ENCODE measurements at regions of chr3 and their contacts with region 1.

Region 1: DNA sequence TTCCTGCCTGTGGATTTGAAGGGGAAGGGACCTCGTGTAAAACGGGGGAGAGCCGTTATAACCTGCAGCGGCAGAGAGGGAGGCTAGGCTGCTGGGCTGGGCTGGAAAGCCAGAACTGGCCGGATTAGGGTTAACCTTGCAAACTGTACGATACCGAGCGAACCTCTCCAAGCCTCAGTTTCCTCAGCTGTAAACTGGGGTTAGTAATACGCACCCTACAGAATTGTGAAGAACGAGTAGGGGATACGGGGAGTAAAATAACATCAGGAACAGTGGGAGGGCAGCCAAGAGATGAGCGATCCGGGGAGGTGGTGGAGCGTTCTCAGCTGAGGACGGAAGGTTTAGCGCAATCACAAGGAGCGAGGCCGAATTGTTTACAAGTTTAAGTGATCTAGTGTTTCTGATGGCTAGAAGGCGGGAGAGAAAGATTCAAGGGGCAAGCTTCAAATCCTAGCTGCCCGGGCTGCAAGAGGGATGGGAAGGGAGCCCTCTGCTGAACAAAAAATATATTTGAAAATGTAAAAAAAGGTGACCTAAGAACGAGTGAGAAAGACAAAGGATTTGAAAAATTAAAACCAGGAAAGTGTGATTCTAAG is 768 bp upstream of the SEMA5B start:
- DNase-seq: no peak
- H3K4me3 Mint-ChIP-seq: peak overlapping the region; percentile 74
- H3K27ac Mint-ChIP-seq: no peak overlapping the region
- H3K4me1 Mint-ChIP-seq: peaks cover 14% of the 10 kb centered on the region
- H3K27me3 Mint-ChIP-seq: peaks cover 62% of the 10 kb centered on the region

Region 2: GRCh38 chr3:122739172-122739571 is 289.2 kb before region 1 on chr3:
- intact Hi-C with region 1: no loop called
- DNase-seq: no peak
- H3K4me3 Mint-ChIP-seq: no peak overlapping the region
- H3K27ac Mint-ChIP-seq: no peak overlapping the region
- H3K4me1 Mint-ChIP-seq: no peaks in the 10 kb centered on the region
- H3K27me3 Mint-ChIP-seq: no peaks in the 10 kb centered on the region

Region 3: DNA sequence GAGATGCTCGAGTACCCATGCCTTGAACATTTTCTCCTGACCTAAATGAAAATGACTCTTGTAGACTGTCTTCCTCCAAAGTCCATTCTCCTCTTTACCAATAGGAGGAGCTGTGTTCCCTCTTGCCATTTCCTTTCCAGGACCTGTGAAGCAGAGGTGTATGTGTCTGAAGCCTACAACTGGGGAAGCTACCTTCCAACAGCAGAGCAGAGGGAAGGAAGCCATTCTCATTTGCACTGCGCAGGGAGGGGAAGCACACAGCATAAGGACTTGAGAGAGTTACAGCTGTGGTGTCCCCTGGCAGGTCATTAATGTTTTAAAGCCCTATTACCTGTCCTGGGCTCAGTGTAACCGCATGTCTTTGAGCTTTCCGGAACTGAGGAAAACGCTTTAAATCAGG is 273.4 kb before region 1 on chr3:
- intact Hi-C with region 1: loop called (anchors 1 kb)
- DNase-seq: no peak
- H3K4me3 Mint-ChIP-seq: no peak overlapping the region
- H3K27ac Mint-ChIP-seq: no peak overlapping the region
- H3K4me1 Mint-ChIP-seq: peaks cover 9% of the 10 kb centered on the region
- H3K27me3 Mint-ChIP-seq: no peaks in the 10 kb centered on the region

Region 4: GRCh38 chr3:122858373-122858772 is 170.0 kb before region 1 on chr3:
- intact Hi-C with region 1: loop called (anchors 1 kb)
- DNase-seq: no peak
- H3K4me3 Mint-ChIP-seq: no peak overlapping the region
- H3K27ac Mint-ChIP-seq: no peak overlapping the region
- H3K4me1 Mint-ChIP-seq: peaks cover 9% of the 10 kb centered on the region
- H3K27me3 Mint-ChIP-seq: no peaks in the 10 kb centered on the region

Region 5: DNA sequence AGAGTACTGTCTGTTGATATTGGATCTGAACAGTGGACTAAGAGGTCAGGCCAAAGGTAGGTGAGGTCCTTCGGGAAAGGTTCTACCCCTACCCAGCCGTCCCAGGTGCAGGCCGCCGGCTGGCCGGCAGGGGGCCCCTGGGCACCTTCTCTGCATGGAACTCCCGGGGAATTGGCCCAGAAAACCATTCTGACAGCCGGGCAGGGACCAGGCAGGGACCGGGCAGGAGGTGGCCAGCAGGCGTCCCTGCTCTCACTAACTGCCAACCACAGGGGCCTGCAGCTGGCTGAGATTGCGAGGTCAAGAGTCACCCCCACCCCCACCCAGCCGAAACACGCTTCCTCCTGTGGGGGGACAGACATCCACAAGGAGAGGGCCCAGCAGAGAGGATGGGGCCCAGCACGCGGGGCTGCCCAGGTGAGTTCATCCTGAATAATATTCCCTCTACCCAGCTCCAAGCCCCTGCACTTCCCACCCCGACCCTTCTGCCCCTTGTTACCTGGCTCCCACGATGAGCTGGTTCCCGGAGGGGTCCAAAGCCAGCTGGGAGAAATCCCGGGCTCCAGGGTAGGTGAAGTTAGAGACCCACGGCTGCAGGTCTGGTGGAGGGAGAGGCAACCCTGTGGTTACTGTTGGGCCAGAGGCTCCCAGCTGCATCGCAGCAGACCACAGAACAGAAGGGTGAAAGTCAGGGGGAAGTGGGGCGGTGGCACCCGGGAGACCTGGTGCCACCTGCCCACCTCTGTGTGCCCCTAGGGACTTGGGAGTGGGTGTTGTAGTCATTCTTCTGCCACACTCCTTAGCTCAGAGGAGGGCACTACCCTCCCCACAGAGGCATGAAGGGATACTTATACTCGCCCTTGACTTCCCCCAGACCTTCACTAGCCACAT is 85.1 kb before region 1 on chr3:
- intact Hi-C with region 1: loop called (anchors 1 kb)
- DNase-seq: no peak
- H3K4me3 Mint-ChIP-seq: no peak overlapping the region
- H3K27ac Mint-ChIP-seq: no peak overlapping the region
- H3K4me1 Mint-ChIP-seq: no peaks in the 10 kb centered on the region
- H3K27me3 Mint-ChIP-seq: peaks cover 14% of the 10 kb centered on the region

Region 6: GRCh38 chr3:123066896-123067688 is 38.8 kb after region 1 on chr3 and contains the start of gene PDIA5:
- intact Hi-C with region 1: loop called (anchors 1 kb)
- DNase-seq: peak; percentile 61
- H3K4me3 Mint-ChIP-seq: peak within 1 kb of the TSS; percentile 91
- H3K27ac Mint-ChIP-seq: peak within 1 kb of the TSS; percentile 52
- H3K4me1 Mint-ChIP-seq: peaks cover 60% of the 10 kb centered on the region
- H3K27me3 Mint-ChIP-seq: no peaks in the 10 kb centered on the region
- total RNA-seq, gene PDIA5: 28.9 and 31.1 TPM in 2 replicates

Region 7: GRCh38 chr3:123258811-123259420 is 230.6 kb after region 1 on chr3:
- intact Hi-C with region 1: loop called (anchors 2 kb)
- DNase-seq: no peak
- H3K4me3 Mint-ChIP-seq: no peak overlapping the region
- H3K27ac Mint-ChIP-seq: no peak overlapping the region
- H3K4me1 Mint-ChIP-seq: peaks cover 10% of the 10 kb centered on the region
- H3K27me3 Mint-ChIP-seq: no peaks in the 10 kb centered on the region

Measured in activated T-helper 1 cell treated with anti-CD3 and anti-CD28 coated beads, Interleukin-12 subunit alpha, Interleukin-12 subunit beta, Interleukin-2, Interleukin-4 antibody, amounts not matched to agents 30 ng/mL and 10 ng/mL and 1 ng/mL, durations not matched to agents 14 hours and 24 hours and 36 hours (primary cell).